Endothelial cell of umbilical vein (primary cell): ENCODE measurements at regions of chr5 and their contacts with region 1.

Region 1: GRCh38 chr5:97838214-97838613 is 655.2 kb upstream of the RIOK2 start:
- DNase-seq: peak; percentile 96
- H3K4me3 ChIP-seq: no peak overlapping the region
- H3K27ac ChIP-seq: peak overlapping the region; percentile 92
- H3K4me1 ChIP-seq: peaks cover 46% of the 10 kb centered on the region
- H3K27me3 ChIP-seq: no peaks in the 10 kb centered on the region
- CTCF ChIP-seq: no peak
- POLR2A ChIP-seq: peak; percentile 47

Region 2: GRCh38 chr5:97547999-97548738 is 290.0 kb before region 1 on chr5:
- CTCF ChIA-PET with region 1: interaction called, 3 read pairs
- POLR2A ChIA-PET with region 1: no interaction called
- dilution Hi-C with region 1: no loop called
- intact Hi-C with region 1: loop called (anchors 5 kb)
- DNase-seq: peak; percentile 84
- H3K4me3 ChIP-seq: no peak overlapping the region
- H3K27ac ChIP-seq: no peak overlapping the region
- H3K4me1 ChIP-seq: peaks cover 23% of the 10 kb centered on the region
- H3K27me3 ChIP-seq: no peaks in the 10 kb centered on the region
- CTCF ChIP-seq: no peak
- POLR2A ChIP-seq: no peak

Region 3: DNA sequence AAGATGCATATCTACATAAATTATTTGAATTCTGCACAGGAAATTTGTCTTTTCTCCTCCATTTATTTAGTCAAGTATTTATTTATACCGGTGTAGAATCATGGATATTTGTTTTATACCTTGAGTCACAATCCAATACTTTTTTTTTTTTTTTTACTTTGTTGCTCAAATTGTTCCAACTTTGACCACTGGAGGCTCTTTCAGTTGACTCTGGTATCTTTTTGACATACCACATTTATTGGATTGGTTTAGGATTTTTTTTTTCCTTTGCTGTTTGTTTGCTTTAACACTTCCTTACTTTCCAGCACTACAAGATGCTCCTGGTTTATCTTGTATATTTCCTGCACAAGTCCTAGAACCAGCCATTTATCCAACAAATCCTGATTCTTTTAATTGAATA is 112.1 kb before region 1 on chr5:
- CTCF ChIA-PET with region 1: no interaction called
- POLR2A ChIA-PET with region 1: no interaction called
- dilution Hi-C with region 1: no loop called
- intact Hi-C with region 1: no loop called
- DNase-seq: no peak
- H3K4me3 ChIP-seq: no peak overlapping the region
- H3K27ac ChIP-seq: no peak overlapping the region
- H3K4me1 ChIP-seq: no peaks in the 10 kb centered on the region
- H3K27me3 ChIP-seq: no peaks in the 10 kb centered on the region
- CTCF ChIP-seq: no peak
- POLR2A ChIP-seq: no peak

Region 4: DNA sequence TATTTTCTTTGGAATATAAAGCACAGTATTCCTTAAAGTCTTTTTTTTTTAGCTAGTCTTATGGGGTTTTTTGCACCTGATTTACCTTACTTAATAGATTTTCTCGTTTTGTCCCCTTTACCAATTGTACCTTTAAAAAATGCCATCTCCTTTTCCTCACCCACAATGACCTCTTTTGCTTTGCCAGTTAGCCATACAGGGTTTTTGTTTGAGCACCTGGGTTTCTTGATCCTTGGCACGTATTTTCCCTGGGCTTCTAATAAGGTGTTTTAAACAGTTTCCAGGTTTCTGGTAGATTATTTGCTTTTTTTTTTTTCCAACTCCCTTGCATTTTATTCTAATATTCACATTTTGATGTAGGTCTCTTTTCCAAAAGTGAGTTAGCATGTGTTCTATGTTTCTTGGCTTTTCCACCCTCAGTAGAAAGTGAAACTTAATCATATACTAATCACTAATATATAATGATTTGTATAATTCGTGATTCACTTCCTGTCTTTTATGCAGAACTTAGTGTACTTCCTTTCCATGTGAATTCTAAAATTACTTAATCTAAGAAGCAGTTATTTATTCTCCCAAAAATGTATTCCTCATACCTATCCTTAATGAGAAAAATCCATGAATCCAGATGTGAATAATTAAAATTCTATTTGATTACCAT is 261.4 kb after region 1 on chr5:
- CTCF ChIA-PET with region 1: interaction called, 3 read pairs
- POLR2A ChIA-PET with region 1: no interaction called
- dilution Hi-C with region 1: no loop called
- intact Hi-C with region 1: loop called (anchors 1 kb)
- DNase-seq: peak; percentile 59
- H3K4me3 ChIP-seq: peak overlapping the region in 1 of 3 experiments; percentile 15
- H3K27ac ChIP-seq: peak overlapping the region; percentile 84
- H3K4me1 ChIP-seq: peaks cover 27% of the 10 kb centered on the region
- H3K27me3 ChIP-seq: no peaks in the 10 kb centered on the region
- CTCF ChIP-seq: no peak
- POLR2A ChIP-seq: no peak

Region 5: DNA sequence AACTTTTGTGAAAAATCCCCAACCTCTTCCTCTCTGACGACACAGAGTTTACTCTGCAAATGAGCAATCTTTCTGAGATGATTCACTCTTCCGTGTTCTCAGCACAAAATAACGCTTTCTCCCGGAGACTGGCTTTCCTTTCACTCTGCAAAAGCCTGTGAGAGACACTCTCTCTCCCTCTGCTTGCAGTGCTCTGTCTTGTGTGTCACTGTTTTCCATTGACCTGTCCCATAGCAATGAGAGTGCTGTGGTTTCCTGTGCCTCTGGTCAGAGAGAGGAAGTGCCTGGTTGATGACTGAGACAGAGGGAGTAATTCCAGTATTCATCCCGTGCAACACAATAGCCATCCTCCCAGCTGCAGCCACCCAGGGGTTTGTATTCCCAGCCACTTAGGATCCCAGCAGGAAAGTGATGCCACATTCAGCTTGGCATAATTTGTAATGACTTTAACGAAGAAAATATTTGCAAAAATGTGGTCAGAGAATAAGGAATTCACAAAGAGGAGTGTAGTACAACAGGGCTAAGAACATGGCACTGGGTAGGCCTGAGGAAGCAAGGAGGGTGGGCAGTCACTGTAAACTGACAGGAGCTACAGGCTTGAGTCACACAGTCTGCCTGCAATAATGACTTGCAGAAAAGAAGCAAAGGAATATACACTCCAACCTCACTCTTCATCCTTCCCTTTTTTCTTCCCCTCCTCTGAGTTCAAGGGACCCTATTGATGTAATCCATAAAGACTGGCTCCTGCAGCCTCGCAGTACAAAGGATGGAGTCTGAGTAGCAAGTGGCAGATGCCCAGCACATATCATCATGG is 471.8 kb after region 1 on chr5:
- CTCF ChIA-PET with region 1: interaction called, 3 read pairs
- POLR2A ChIA-PET with region 1: no interaction called
- dilution Hi-C with region 1: no loop called
- intact Hi-C with region 1: loop called (anchors 1 kb)
- DNase-seq: peak; percentile 95
- H3K4me3 ChIP-seq: peak overlapping the region in 2 of 3 experiments; percentile 10 to 72
- H3K27ac ChIP-seq: peak overlapping the region; percentile 97
- H3K4me1 ChIP-seq: peaks cover 63% of the 10 kb centered on the region
- H3K27me3 ChIP-seq: no peaks in the 10 kb centered on the region
- CTCF ChIP-seq: no peak
- POLR2A ChIP-seq: no peak

Region 6: DNA sequence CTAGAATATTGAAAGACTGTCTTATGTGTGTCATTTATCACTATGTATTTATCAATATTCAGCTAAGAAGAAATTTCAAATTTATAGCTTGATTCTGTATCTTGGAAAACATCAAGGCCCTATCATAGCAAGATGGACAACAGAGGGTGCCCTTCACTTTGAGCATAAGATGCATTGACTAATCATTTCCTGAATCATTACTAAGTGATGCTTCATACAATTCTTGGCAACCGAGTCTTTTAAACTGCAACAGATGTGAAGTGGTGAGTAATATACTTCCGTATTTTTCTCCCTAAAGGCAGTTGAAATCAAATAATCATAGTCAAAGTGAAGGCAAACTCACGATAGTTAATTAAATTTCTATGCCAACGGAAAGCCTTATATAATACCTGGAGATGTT is 616.7 kb after region 1 on chr5:
- CTCF ChIA-PET with region 1: no interaction called
- POLR2A ChIA-PET with region 1: no interaction called
- dilution Hi-C with region 1: no loop called
- intact Hi-C with region 1: loop called (anchors 5 kb)
- DNase-seq: peak; percentile 80
- H3K4me3 ChIP-seq: peak overlapping the region in 1 of 3 experiments; percentile 53
- H3K27ac ChIP-seq: peak overlapping the region; percentile 72
- H3K4me1 ChIP-seq: peaks cover 19% of the 10 kb centered on the region
- H3K27me3 ChIP-seq: no peaks in the 10 kb centered on the region
- CTCF ChIP-seq: peak in 1 of 2 donors; percentile 4
- POLR2A ChIP-seq: no peak